ENCODE measurements at regions of chr17 and their contacts with region 1.

Region 1: GRCh38 chr17:44199553-44200477 is at the start of gene ATXN7L3:
- DNase-seq: peak; percentile 87
- ATAC-seq: peak; percentile 89
- H3K4me3 ChIP-seq: peak within 1 kb of the TSS; percentile 100
- H3K27ac ChIP-seq: peak within 1 kb of the TSS; percentile 98
- H3K4me1 ChIP-seq: peaks cover 16% of the 10 kb centered on the region
- H3K27me3 ChIP-seq: no peaks in the 10 kb centered on the region
- CTCF ChIP-seq: no peak
- EP300 ChIP-seq: 0 out of 4 replicates have a peak, but pooled peaks of 1 of the 2 experiments have one; percentile 39
- POLR2A ChIP-seq: peak; percentile 33; the same call in 1 of the 2 replicates
- RAD21 ChIP-seq: no peak
- polyA plus RNA-seq, gene ATXN7L3: 0.71 to 2.3 TPM

Region 2: DNA sequence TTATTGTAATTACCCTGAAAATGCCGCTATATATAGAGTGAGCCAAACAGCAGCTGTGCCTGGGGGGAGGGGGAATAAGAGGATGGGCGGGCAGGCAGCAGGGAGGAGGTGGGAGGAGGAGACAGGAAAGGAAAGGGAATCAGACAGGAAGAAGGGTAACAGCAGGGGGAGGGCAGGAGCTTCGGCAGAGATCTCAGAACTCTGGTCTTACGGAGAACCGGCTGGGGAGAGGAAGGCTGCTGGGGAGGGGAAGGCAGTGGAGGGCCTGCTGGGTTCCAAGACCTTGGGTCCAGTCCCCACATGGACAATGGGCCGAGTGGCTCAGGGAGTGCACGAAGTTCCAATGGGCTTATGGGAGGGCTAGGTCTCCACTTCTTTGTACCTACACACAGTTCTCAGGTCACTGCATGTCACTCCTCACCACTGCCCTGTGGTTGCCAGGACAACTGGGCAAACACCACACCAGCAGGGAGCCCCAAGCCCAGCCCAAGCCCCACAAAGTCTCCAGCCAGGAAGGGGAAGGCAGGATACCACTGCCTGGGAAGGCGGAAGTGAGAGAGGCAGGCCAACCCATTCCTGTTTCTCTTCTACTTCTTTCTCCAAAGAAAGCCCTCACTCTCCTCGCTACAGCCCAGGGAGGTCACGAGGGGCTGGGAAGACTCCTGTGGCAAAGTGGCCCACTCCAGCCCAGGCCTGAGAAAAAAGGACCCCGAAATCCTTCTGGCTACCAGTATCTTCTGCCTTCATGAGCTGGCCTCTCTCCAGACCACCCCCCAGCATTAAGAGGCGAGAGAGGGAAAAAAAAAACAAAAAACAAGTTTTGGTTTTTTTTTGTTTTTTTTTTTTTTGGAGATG is 103.9 kb before region 1 on chr17:
- CTCF ChIA-PET with region 1: no interaction called
- POLR2A ChIA-PET with region 1: no interaction called
- RAD21 ChIA-PET with region 1: no interaction called
- SMC1A ChIA-PET with region 1: no interaction called
- in situ Hi-C with region 1: no loop called
- intact Hi-C with region 1: no loop called
- DNase-seq: no peak
- ATAC-seq: peak; percentile 80
- H3K4me3 ChIP-seq: peak overlapping the region; percentile 31; the same call in 1 of the 2 replicates
- H3K27ac ChIP-seq: peak overlapping the region; percentile 67
- H3K4me1 ChIP-seq: peaks cover 24% of the 10 kb centered on the region
- H3K27me3 ChIP-seq: no peaks in the 10 kb centered on the region
- CTCF ChIP-seq: no peak
- EP300 ChIP-seq: no peak
- POLR2A ChIP-seq: 0 out of 2 replicates have a peak, but pooled peaks have one; percentile 28
- RAD21 ChIP-seq: no peak

Region 3: GRCh38 chr17:44210342-44211192 is 10.8 kb after region 1 on chr17:
- CTCF ChIA-PET with region 1: interaction called, 45 read pairs
- POLR2A ChIA-PET with region 1: interaction called, 8 read pairs
- RAD21 ChIA-PET with region 1: interaction called, 6 read pairs
- SMC1A ChIA-PET with region 1: interaction called, 18 read pairs
- in situ Hi-C with region 1: no loop called
- intact Hi-C with region 1: no loop called
- DNase-seq: no peak
- ATAC-seq: peak; percentile 98
- H3K4me3 ChIP-seq: peak overlapping the region; percentile 54; the same call in 1 of the 2 replicates
- H3K27ac ChIP-seq: peak overlapping the region; percentile 82
- H3K4me1 ChIP-seq: peaks cover 22% of the 10 kb centered on the region
- H3K27me3 ChIP-seq: no peaks in the 10 kb centered on the region
- CTCF ChIP-seq: peak; percentile 98 to 100 (median 99); a peak in 5 of 6 replicates
- EP300 ChIP-seq: no peak
- POLR2A ChIP-seq: peak; percentile 79
- RAD21 ChIP-seq: peak; percentile 91

Region 4: GRCh38 chr17:44324571-44325275 is 124.9 kb after region 1 on chr17 and contains the start of gene SLC25A39:
- CTCF ChIA-PET with region 1: interaction called, 16 read pairs
- POLR2A ChIA-PET with region 1: interaction called, 5 read pairs
- RAD21 ChIA-PET with region 1: interaction called, 5 read pairs
- SMC1A ChIA-PET with region 1: interaction called, 7 read pairs
- in situ Hi-C with region 1: loop called (anchors 5 kb)
- intact Hi-C with region 1: no loop called
- DNase-seq: no peak
- ATAC-seq: peak; percentile 80
- H3K4me3 ChIP-seq: peak within 1 kb of the TSS; percentile 97
- H3K27ac ChIP-seq: peak within 1 kb of the TSS; percentile 96
- H3K4me1 ChIP-seq: peaks cover 8% of the 10 kb centered on the region
- H3K27me3 ChIP-seq: no peaks in the 10 kb centered on the region
- CTCF ChIP-seq: no peak
- EP300 ChIP-seq: no peak
- POLR2A ChIP-seq: peak; percentile 88
- RAD21 ChIP-seq: no peak
- polyA plus RNA-seq, gene SLC25A39: 3.5 to 7.5 TPM

Region 5: DNA sequence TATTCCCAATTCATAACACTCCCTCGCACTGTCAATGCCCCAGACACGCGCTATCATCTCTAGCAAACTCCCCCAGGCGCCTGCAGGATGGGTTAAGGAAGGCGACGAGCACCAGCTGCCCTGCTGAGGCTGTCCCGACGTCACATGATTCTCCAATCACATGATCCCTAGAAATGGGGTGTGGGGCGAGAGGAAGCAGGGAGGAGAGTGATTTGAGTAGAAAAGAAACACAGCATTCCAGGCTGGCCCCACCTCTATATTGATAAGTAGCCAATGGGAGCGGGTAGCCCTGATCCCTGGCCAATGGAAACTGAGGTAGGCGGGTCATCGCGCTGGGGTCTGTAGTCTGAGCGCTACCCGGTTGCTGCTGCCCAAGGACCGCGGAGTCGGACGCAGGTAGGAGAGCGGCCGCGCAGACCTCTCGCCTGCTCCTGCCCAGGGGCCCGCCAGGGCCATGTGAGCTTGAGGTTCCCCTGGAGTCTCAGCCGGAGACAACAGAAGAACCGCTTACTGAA is 145.2 kb after region 1 on chr17 and contains the start of gene GRN:
- CTCF ChIA-PET with region 1: interaction called, 21 read pairs
- POLR2A ChIA-PET with region 1: interaction called, 6 read pairs
- RAD21 ChIA-PET with region 1: interaction called, 10 read pairs
- SMC1A ChIA-PET with region 1: interaction called, 4 read pairs
- in situ Hi-C with region 1: no loop called
- intact Hi-C with region 1: loop called (anchors 5 kb)
- DNase-seq: peak; percentile 92
- ATAC-seq: peak; percentile 84
- H3K4me3 ChIP-seq: peak within 1 kb of the TSS; percentile 87
- H3K27ac ChIP-seq: peak within 1 kb of the TSS; percentile 92
- H3K4me1 ChIP-seq: peaks cover 37% of the 10 kb centered on the region
- H3K27me3 ChIP-seq: no peaks in the 10 kb centered on the region
- CTCF ChIP-seq: no peak
- EP300 ChIP-seq: no peak
- POLR2A ChIP-seq: peak; percentile 92
- RAD21 ChIP-seq: no peak
- polyA plus RNA-seq, gene GRN: 22.3 to 33.2 TPM